ENCODE measurements at regions of chr7 and their contacts with region 1.

Region 1: GRCh38 chr7:42745357-42746059 is 166.4 kb downstream of the C7orf25 start:
- DNase-seq: peak; percentile 23
- H3K4me3 ChIP-seq: no peak overlapping the region
- H3K27ac ChIP-seq: no peak overlapping the region
- H3K4me1 ChIP-seq: no peaks in the 10 kb centered on the region
- H3K27me3 ChIP-seq: no peaks in the 10 kb centered on the region
- CTCF ChIP-seq: peak; percentile 92
- EP300 ChIP-seq: no peak
- RAD21 ChIP-seq: no peak

Region 2: DNA sequence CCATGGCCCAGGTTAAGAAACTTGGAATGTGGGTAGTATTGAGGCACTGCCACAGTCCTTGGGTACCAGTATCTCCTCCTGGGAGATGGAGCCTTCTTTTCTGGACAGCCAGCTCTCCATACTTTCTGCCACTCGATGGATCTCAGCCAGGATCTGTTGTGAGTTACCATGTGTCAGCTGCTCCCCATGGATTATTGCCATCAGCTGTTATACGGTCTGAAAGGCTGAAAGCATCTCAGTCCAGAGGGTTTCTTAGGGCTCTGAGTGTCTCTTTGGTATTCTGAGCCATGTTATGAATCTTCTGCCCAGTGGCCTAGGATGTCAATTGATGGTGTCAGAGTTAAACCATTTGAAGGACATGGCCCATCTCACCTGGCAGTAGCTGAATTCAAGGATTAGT is 31.2 kb before region 1 on chr7:
- CTCF ChIA-PET with region 1: interaction called, 11 read pairs
- POLR2A ChIA-PET with region 1: no interaction called
- DNase-seq: no peak
- H3K4me3 ChIP-seq: no peak overlapping the region
- H3K27ac ChIP-seq: no peak overlapping the region
- H3K4me1 ChIP-seq: no peaks in the 10 kb centered on the region
- H3K27me3 ChIP-seq: no peaks in the 10 kb centered on the region
- CTCF ChIP-seq: no peak
- EP300 ChIP-seq: no peak
- RAD21 ChIP-seq: no peak

Region 3: GRCh38 chr7:42722716-42723115 is 22.8 kb before region 1 on chr7:
- CTCF ChIA-PET with region 1: interaction called, 13 read pairs
- POLR2A ChIA-PET with region 1: no interaction called
- DNase-seq: no peak
- H3K4me3 ChIP-seq: no peak overlapping the region
- H3K27ac ChIP-seq: no peak overlapping the region
- H3K4me1 ChIP-seq: no peaks in the 10 kb centered on the region
- H3K27me3 ChIP-seq: no peaks in the 10 kb centered on the region; the same call in 1 of the 2 replicates
- CTCF ChIP-seq: no peak
- EP300 ChIP-seq: no peak
- RAD21 ChIP-seq: no peak

Region 4: DNA sequence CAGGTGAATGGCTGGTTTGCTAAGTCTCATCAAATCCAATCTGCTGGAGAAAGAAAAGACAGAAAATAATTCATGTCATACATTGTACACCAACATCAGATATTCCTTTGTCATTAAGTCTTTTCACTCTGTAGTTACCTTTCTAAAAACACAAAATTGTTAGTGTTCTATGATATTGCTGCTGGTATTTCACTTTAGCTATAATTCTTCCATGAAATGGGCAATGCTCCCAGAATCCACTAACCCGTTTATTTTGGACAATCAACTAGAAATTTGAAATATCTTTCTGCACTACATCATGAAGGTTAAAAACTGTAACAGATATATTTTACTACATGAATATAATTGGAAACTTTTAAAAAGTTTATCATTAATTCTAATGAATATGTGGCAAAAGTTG is 14.9 kb before region 1 on chr7:
- CTCF ChIA-PET with region 1: interaction called, 13 read pairs
- POLR2A ChIA-PET with region 1: no interaction called
- DNase-seq: no peak
- H3K4me3 ChIP-seq: no peak overlapping the region
- H3K27ac ChIP-seq: no peak overlapping the region
- H3K4me1 ChIP-seq: no peaks in the 10 kb centered on the region
- H3K27me3 ChIP-seq: no peaks in the 10 kb centered on the region
- CTCF ChIP-seq: no peak
- EP300 ChIP-seq: no peak
- RAD21 ChIP-seq: no peak

Region 5: GRCh38 chr7:42758124-42758523 is 12.6 kb after region 1 on chr7:
- CTCF ChIA-PET with region 1: interaction called, 15 read pairs
- POLR2A ChIA-PET with region 1: no interaction called
- DNase-seq: no peak
- H3K4me3 ChIP-seq: no peak overlapping the region
- H3K27ac ChIP-seq: no peak overlapping the region
- H3K4me1 ChIP-seq: no peaks in the 10 kb centered on the region
- H3K27me3 ChIP-seq: no peaks in the 10 kb centered on the region
- CTCF ChIP-seq: no peak
- EP300 ChIP-seq: no peak
- RAD21 ChIP-seq: no peak

Region 6: DNA sequence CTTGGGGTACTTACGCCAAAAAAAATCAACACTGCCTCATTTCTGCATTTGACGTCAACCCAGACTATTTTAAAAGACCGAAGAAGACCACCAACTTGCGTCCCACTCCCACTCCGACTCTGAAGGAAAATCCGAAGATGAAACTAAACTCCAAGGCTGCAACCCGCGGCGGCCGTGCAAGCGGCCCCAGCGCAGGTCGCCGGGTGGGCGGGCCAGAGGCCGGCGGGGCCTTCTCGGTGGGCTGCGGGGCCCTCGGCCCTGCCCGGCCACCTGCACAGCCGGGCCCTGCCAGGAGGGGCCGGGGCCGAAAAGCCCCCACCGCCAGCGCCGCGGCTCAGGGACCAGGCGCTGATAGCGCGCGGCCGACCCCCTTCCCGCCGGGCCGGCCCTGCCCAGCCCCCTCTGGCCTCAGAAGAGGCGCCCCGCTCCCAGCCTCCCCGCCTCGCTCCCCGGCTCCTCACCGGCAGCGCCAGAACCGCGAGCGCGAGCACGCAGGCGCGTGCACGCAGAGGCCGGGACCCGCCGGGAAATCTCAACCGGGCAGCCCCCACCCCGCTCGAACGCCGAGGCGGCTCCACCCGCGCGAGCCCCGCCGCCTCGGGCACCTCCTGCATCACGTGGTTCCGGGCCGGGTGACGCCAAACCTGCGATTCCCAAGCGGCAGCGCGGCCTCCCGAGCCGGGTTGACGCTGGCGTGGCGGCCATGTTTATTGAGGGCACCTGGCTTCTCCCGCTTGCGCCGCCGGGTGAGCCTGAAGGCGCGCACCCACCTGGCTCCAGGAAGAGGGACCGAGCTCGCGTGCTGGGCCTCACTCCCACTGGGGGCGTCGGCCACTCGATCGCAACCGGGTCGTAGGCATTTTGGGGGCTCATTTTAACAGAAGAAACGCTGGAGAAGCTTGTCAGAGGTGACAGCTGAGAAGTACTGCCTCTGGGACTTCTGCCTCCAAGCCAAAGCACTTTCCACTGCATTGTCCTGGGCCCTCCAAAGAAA is 166.2 kb after region 1 on chr7 and contains the start of gene C7orf25:
- CTCF ChIA-PET with region 1: no interaction called
- POLR2A ChIA-PET with region 1: no interaction called
- DNase-seq: peak; percentile 100
- H3K4me3 ChIP-seq: peak within 1 kb of the TSS; percentile 81 to 87
- H3K27ac ChIP-seq: peak within 1 kb of the TSS; percentile 7 to 84; a peak in 3 of 4 replicates
- H3K4me1 ChIP-seq: peaks cover 0 to 16% of the 10 kb centered on the region in 2 experiments; a peak in 2 of 4 replicates
- H3K27me3 ChIP-seq: no peaks in the 10 kb centered on the region
- CTCF ChIP-seq: 0 out of 2 replicates have a peak, but pooled peaks have one; percentile 11
- EP300 ChIP-seq: peak; percentile 6 to 64; a peak in 2 of 4 replicates
- RAD21 ChIP-seq: peak; percentile 4; the same call in 1 of the 2 replicates
- polyA plus RNA-seq, gene C7orf25: 6.1 and 7.8 TPM in 2 replicates

Region 7: DNA sequence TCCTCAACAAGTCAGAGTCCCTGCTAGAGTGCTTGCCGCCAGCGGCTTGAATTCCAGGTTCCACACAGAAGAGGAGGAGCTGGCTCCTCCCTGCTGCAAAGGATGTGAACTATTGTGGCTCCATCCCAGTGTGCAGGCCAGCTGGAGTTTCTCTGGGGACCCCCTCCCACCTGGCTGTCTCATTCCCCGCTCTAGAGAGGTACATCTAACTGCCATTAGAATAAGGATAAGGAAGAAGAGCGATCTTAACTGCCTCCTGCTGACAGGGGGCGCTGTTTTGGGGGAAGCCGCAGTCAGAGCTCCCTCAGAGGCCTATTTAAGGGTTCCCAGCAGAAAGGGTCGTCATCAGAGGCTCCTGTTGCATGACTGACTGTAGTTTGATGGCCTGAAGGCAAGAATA is 326.1 kb after region 1 on chr7:
- CTCF ChIA-PET with region 1: no interaction called
- POLR2A ChIA-PET with region 1: no interaction called
- DNase-seq: peak; percentile 19
- H3K4me3 ChIP-seq: no peak overlapping the region; a peak in 1 of 4 replicates
- H3K27ac ChIP-seq: no peak overlapping the region
- H3K4me1 ChIP-seq: no peaks in the 10 kb centered on the region
- H3K27me3 ChIP-seq: peaks cover 23% of the 10 kb centered on the region
- CTCF ChIP-seq: peak; percentile 62
- EP300 ChIP-seq: no peak
- RAD21 ChIP-seq: peak; percentile 30; the same call in 1 of the 2 replicates